ENCODE measurements at regions of chr22 and their contacts with region 1.

Region 1: GRCh38 chr22:50620593-50621355 is 7.2 kb downstream of the ARSA start:
- DNase-seq: peak; percentile 17
- H3K4me3 Mint-ChIP-seq: peak overlapping the region; percentile 68
- H3K27ac Mint-ChIP-seq: no peak overlapping the region
- H3K4me1 Mint-ChIP-seq: peaks cover 26% of the 10 kb centered on the region
- H3K27me3 Mint-ChIP-seq: no peaks in the 10 kb centered on the region
- CTCF ChIP-seq: no peak

Region 2: GRCh38 chr22:50250555-50251476 is 370.0 kb before region 1 on chr22 and contains the start of gene HDAC10:
- CTCF ChIA-PET with region 1: interaction called, 4 read pairs
- POLR2A ChIA-PET with region 1: interaction called, 6 read pairs
- intact Hi-C with region 1: loop called (anchors 5 kb)
- DNase-seq: peak; percentile 68
- H3K4me3 Mint-ChIP-seq: peak within 1 kb of the TSS; percentile 72
- H3K27ac Mint-ChIP-seq: no peak within 1 kb of the TSS
- H3K4me1 Mint-ChIP-seq: no peaks in the 10 kb centered on the region
- H3K27me3 Mint-ChIP-seq: no peaks in the 10 kb centered on the region
- CTCF ChIP-seq: no peak
- total RNA-seq, gene HDAC10: 27.5 and 29.2 TPM in 2 replicates

Region 3: GRCh38 chr22:50314455-50315288 is 306.1 kb before region 1 on chr22:
- CTCF ChIA-PET with region 1: no interaction called
- POLR2A ChIA-PET with region 1: no interaction called
- intact Hi-C with region 1: no loop called
- DNase-seq: peak; percentile 55
- H3K4me3 Mint-ChIP-seq: no peak overlapping the region
- H3K27ac Mint-ChIP-seq: no peak overlapping the region
- H3K4me1 Mint-ChIP-seq: peaks cover 6% of the 10 kb centered on the region
- H3K27me3 Mint-ChIP-seq: no peaks in the 10 kb centered on the region
- CTCF ChIP-seq: no peak

Region 4: DNA sequence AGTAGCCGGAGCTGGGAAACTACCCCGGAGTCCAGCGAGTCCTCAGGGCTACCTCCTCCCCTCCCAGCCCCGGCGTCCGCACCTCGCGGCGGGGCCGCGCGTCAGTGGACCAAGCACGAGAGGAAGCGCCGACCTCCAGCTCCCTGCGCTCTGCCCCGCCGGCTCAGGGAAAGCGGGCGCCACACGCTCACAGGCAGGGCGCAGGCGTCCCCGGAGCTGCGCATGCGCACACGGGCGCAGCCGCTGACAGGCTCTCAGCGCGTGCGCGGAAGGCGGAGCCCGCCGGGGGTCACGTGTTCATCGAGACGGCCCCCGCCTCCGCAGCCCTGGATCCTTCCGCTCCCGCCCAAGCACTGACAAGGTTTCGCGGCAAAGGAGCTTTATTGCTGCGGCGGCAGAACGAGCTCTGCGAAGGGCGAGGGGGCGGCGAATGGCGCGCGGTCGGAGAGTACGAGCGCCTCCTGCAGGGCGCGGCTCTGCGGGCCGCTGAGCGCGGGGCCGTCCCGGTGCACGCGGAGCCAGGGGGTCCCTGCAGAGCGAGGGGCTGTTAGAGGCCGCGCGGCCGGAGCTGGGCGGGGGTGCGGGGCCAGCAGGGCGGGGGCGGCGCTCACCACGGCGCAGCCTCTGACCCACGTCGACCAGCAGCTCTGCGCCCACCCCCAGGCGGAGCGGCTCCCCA is 95.2 kb before region 1 on chr22 and contains the start of gene SCO2:
- CTCF ChIA-PET with region 1: interaction called, 17 read pairs
- POLR2A ChIA-PET with region 1: interaction called, 74 read pairs
- intact Hi-C with region 1: loop called (anchors 2 kb)
- DNase-seq: peak; percentile 96
- H3K4me3 Mint-ChIP-seq: peak within 1 kb of the TSS; percentile 85
- H3K27ac Mint-ChIP-seq: peak within 1 kb of the TSS; percentile 88
- H3K4me1 Mint-ChIP-seq: peaks cover 20% of the 10 kb centered on the region
- H3K27me3 Mint-ChIP-seq: no peaks in the 10 kb centered on the region
- CTCF ChIP-seq: peak; percentile 49
- total RNA-seq, gene SCO2: 2.4 and 5.4 TPM in 2 replicates

Region 5: DNA sequence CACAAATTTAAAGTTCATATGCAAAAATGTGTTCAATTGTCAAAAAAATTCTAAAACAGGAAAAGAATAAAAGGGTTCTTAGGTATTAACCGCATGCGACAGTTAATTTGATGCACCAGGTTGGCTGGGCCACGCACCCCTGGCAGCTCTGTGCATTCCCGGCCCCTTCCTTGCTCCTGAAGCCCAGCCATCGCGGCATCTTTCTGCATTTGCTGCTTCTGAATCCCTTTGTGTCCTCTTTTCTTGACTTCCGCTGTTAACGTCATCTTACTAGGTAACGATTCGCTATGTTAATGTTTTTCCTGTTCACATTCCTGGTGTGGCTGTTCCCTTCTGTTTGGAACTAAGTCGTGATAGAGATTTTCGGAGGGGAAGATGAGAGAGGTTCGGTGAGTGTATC is 83.0 kb before region 1 on chr22:
- CTCF ChIA-PET with region 1: interaction called, 5 read pairs
- POLR2A ChIA-PET with region 1: interaction called, 24 read pairs
- intact Hi-C with region 1: no loop called
- DNase-seq: no peak
- H3K4me3 Mint-ChIP-seq: no peak overlapping the region
- H3K27ac Mint-ChIP-seq: peak overlapping the region; percentile 85
- H3K4me1 Mint-ChIP-seq: peaks cover 40% of the 10 kb centered on the region
- H3K27me3 Mint-ChIP-seq: no peaks in the 10 kb centered on the region
- CTCF ChIP-seq: no peak

Region 6: GRCh38 chr22:50582562-50583293 is 38.0 kb before region 1 on chr22 and contains the start of gene CHKB:
- CTCF ChIA-PET with region 1: interaction called, 9 read pairs
- POLR2A ChIA-PET with region 1: interaction called, 22 read pairs
- intact Hi-C with region 1: loop called (anchors 2 kb)
- DNase-seq: peak; percentile 98
- H3K4me3 Mint-ChIP-seq: peak within 1 kb of the TSS; percentile 94
- H3K27ac Mint-ChIP-seq: peak within 1 kb of the TSS; percentile 93
- H3K4me1 Mint-ChIP-seq: no peaks in the 10 kb centered on the region
- H3K27me3 Mint-ChIP-seq: no peaks in the 10 kb centered on the region
- CTCF ChIP-seq: no peak
- total RNA-seq, gene CHKB: 51.4 and 60.6 TPM in 2 replicates